ENCODE measurements at regions of chr15 and their contacts with region 1.

Region 1: DNA sequence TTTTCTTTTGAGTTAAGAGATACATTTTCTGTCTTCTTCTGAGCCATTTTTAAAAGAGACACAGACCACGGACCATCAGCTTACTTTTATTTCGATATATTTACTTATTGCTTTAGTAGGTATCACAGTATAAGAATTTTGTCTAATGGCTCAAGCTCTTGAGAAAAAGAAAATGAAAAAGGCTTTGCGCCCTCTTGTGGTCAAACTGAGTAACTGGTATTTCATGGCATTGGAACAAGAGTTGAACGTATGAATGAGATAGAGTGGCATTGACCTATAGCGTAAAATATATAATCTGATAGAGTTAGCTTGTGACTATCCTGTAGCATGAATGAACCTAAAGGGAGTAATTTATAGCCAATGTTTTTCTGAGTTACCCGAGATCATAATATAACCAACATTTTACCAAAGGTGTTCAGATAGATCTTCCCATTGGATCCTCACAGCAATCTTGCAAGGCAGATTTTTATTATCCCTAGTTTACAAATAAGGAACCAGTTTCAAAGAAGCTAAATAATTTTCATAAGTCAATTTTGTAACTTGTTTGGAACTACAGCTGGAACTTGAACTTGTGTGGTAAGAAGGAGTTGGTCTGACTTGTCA is 154.6 kb downstream of the POLR2M start:
- DNase-seq: peak; percentile 84
- H3K4me3 ChIP-seq: no peak overlapping the region
- H3K27ac ChIP-seq: peak overlapping the region; percentile 45
- H3K4me1 ChIP-seq: peaks cover 10% of the 10 kb centered on the region
- H3K27me3 ChIP-seq: peaks cover 0 to 2% of the 10 kb centered on the region in 2 experiments
- CTCF ChIP-seq: peak; percentile 58
- POLR2A ChIP-seq: no peak

Region 2: DNA sequence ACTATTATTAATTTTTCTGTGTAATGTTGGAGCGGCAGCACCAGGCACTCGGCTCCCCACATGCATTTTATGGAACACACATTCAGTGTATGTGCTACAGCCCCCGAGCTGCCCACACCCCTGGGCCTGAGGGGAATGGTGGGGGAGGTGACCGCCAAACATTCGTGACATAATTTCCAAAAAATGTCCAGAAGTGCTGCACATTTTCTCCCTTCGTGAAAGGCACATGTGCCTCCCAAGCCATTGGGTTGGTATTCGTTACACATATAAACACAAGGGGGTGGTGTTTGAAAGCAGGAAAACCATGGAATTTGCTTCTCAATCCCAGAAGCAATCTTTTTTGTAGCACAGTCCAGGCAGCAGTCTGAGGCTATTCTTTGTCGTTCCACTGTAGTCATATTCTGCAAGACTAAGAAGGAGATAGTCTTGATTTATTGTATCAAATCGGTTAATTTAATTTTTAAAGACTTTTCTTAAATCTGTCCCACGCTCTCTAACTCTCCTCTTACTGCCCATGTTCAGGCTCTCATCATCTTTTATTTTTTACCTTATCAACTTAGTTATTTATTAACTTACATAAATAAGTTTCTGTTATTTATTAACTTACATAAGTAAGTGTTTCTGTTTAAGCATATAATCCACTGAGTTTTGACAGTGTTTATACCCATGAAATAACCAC is 193.8 kb before region 1 on chr15:
- CTCF ChIA-PET with region 1: interaction called, 29 read pairs
- POLR2A ChIA-PET with region 1: no interaction called
- dilution Hi-C with region 1: no loop called
- intact Hi-C with region 1: loop called (anchors 1 kb)
- DNase-seq: peak; percentile 67
- H3K4me3 ChIP-seq: no peak overlapping the region
- H3K27ac ChIP-seq: no peak overlapping the region
- H3K4me1 ChIP-seq: peaks cover 7% of the 10 kb centered on the region
- H3K27me3 ChIP-seq: no peaks in the 10 kb centered on the region
- CTCF ChIP-seq: peak in 1 of 2 donors; percentile 42
- POLR2A ChIP-seq: no peak

Region 3: GRCh38 chr15:57751177-57751800 is 109.8 kb before region 1 on chr15:
- CTCF ChIA-PET with region 1: interaction called, 714 read pairs
- POLR2A ChIA-PET with region 1: interaction called, 3 read pairs
- dilution Hi-C with region 1: no loop called
- intact Hi-C with region 1: loop called (anchors 1 kb)
- DNase-seq: peak; percentile 72
- H3K4me3 ChIP-seq: no peak overlapping the region
- H3K27ac ChIP-seq: no peak overlapping the region
- H3K4me1 ChIP-seq: no peaks in the 10 kb centered on the region
- H3K27me3 ChIP-seq: no peaks in the 10 kb centered on the region
- CTCF ChIP-seq: peak; percentile 53 to 67
- POLR2A ChIP-seq: no peak

Region 4: GRCh38 chr15:57769266-57769665 is 91.9 kb before region 1 on chr15:
- CTCF ChIA-PET with region 1: interaction called, 20 read pairs
- POLR2A ChIA-PET with region 1: no interaction called
- dilution Hi-C with region 1: no loop called
- intact Hi-C with region 1: no loop called
- DNase-seq: peak; percentile 10
- H3K4me3 ChIP-seq: no peak overlapping the region
- H3K27ac ChIP-seq: no peak overlapping the region
- H3K4me1 ChIP-seq: no peaks in the 10 kb centered on the region
- H3K27me3 ChIP-seq: no peaks in the 10 kb centered on the region
- CTCF ChIP-seq: no peak
- POLR2A ChIP-seq: no peak

Region 5: DNA sequence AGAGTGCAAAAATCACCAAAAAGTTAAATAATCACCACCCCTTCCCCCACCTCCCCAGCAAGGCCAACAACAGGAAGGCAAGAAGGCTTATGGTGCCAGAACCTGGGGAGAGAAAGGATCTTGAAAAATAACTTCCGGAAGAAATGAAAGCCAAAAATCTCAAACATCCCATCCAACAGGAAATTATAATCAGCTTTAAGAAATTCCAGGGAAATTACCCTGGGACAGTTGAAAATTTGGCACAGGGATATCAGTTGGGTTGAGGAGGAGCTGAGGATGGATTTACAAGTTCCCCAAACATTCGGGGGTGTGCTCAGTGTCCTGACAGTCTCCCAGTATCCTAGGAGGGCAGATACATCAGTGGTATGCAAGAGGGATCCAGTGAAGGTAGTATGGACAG is 71.9 kb before region 1 on chr15:
- CTCF ChIA-PET with region 1: interaction called, 13 read pairs
- POLR2A ChIA-PET with region 1: no interaction called
- dilution Hi-C with region 1: no loop called
- intact Hi-C with region 1: no loop called
- DNase-seq: peak; percentile 39
- H3K4me3 ChIP-seq: no peak overlapping the region
- H3K27ac ChIP-seq: no peak overlapping the region
- H3K4me1 ChIP-seq: peaks cover 16% of the 10 kb centered on the region
- H3K27me3 ChIP-seq: no peaks in the 10 kb centered on the region
- CTCF ChIP-seq: no peak
- POLR2A ChIP-seq: no peak

Region 6: GRCh38 chr15:57849317-57849716 is 11.8 kb before region 1 on chr15:
- CTCF ChIA-PET with region 1: interaction called, 32 read pairs
- POLR2A ChIA-PET with region 1: no interaction called
- dilution Hi-C with region 1: no loop called
- intact Hi-C with region 1: no loop called
- DNase-seq: no peak
- H3K4me3 ChIP-seq: no peak overlapping the region
- H3K27ac ChIP-seq: no peak overlapping the region
- H3K4me1 ChIP-seq: no peaks in the 10 kb centered on the region
- H3K27me3 ChIP-seq: peaks cover 16 to 18% of the 10 kb centered on the region in 2 experiments
- CTCF ChIP-seq: no peak
- POLR2A ChIP-seq: no peak

Region 7: GRCh38 chr15:57923306-57923705 is 62.2 kb after region 1 on chr15:
- CTCF ChIA-PET with region 1: interaction called, 19 read pairs
- POLR2A ChIA-PET with region 1: no interaction called
- dilution Hi-C with region 1: no loop called
- intact Hi-C with region 1: no loop called
- DNase-seq: peak; percentile 90
- H3K4me3 ChIP-seq: peak overlapping the region in 1 of 3 experiments; percentile 39
- H3K27ac ChIP-seq: peak overlapping the region; percentile 63
- H3K4me1 ChIP-seq: peaks cover 39% of the 10 kb centered on the region
- H3K27me3 ChIP-seq: no peaks in the 10 kb centered on the region
- CTCF ChIP-seq: no peak
- POLR2A ChIP-seq: no peak

Measured in endothelial cell of umbilical vein (primary cell).